ENCODE measurements at regions of chr2 and their contacts with region 1.

Region 1: DNA sequence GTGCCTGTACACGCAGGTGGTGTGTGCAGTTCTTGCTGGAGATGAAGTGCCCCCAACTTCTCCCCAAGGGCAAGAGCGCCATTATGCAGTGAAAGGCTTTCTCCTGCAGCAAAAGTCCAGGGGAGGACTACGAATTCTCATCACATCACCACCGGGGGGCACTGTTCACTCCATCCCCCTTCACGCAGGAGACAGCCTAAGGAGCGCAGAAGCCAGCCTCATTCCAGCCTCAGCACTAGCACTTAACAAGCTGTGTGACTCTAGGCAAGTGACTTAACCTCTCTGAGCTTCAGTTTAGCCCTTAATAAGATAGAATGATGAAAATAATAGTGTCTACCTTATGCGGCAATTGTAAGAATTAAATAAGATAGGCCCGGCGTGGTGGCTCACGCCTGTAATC is 32.3 kb downstream of the DNMT3A start:
- DNase-seq: peak; percentile 45 to 85 (median 66)
- ATAC-seq: peak; percentile 48 to 54
- H3K4me3 Mint-ChIP-seq: peak overlapping the region in 8 of 10 donors; percentile 23 to 73 (median 53)
- H3K27ac Mint-ChIP-seq: peak overlapping the region; percentile 58 to 91 (median 85)
- H3K4me1 Mint-ChIP-seq: peaks cover 50 to 98% (median 90%) of the 10 kb centered on the region in 4 donors
- H3K27me3 Mint-ChIP-seq: no peaks in the 10 kb centered on the region

Region 2: DNA sequence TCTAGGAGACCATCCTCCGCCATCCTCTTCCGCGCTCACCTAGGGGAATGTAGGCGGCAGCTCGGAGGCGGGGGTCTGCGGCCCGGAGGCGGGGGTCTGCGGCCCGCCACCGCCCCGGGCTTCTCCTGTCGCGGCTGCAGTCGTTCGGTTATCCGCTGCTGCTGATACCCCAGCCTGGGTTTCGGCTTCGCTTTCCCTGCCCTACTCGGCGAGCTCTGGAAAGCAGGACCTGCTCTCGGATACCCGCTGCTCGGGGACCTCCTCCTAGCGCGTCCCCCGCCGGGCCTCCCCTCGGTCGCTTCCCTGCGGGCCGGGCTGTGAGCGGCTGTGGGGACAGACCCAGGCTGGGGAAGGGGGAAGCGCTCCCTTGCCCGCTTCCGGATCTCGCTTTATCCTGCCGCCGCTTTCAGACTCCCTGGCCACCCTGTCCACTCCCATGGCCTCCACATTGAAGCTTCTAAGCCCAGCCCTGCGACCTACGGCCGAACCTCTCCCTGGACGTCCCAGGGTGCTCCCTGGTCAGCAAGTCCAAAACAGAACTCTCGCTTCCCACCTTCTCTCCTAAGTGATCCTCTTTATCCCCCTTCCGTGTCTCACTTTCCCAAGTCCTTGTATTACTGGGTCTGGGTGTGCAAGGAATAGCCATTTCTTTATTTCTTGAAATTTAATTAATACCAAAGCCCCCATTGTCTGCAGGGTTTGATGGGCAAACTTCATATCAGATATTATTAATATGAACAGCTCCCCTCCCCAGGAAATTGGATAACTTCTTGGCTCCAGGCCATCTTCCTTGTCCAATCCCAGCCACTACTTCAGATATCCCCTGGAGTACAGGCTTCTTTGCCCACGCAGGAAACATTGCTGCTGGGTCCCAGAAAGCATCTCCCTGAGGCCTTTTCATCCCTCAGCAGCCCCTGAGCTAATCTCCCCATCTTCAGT is 1259.1 kb before region 1 on chr2:
- POLR2A ChIA-PET with region 1: no interaction called
- DNase-seq: peak in 5 of 10 donors; percentile 8 to 17 (median 12)
- ATAC-seq: no peak
- H3K4me3 Mint-ChIP-seq: peak overlapping the region in 8 of 10 donors; percentile 49 to 88 (median 78)
- H3K27ac Mint-ChIP-seq: no peak overlapping the region
- H3K4me1 Mint-ChIP-seq: peaks cover 6 to 26% (median 24%) of the 10 kb centered on the region in 4 donors
- H3K27me3 Mint-ChIP-seq: peaks cover 0 to 8% (median 4%) of the 10 kb centered on the region in 5 donors

Region 3: GRCh38 chr2:25252281-25253105 is 56.9 kb before region 1 on chr2:
- POLR2A ChIA-PET with region 1: interaction called, 24 read pairs
- DNase-seq: peak; percentile 35 to 72 (median 49)
- ATAC-seq: peak; percentile 46 to 56
- H3K4me3 Mint-ChIP-seq: peak overlapping the region; percentile 83 to 95 (median 91)
- H3K27ac Mint-ChIP-seq: peak overlapping the region; percentile 85 to 96 (median 91)
- H3K4me1 Mint-ChIP-seq: peaks cover 42 to 62% (median 53%) of the 10 kb centered on the region in 4 donors
- H3K27me3 Mint-ChIP-seq: no peaks in the 10 kb centered on the region

Region 4: GRCh38 chr2:25332571-25332970 is 23.2 kb after region 1 on chr2:
- POLR2A ChIA-PET with region 1: interaction called, 69 read pairs
- DNase-seq: no peak
- ATAC-seq: no peak
- H3K4me3 Mint-ChIP-seq: peak overlapping the region in 5 of 10 donors; percentile 13 to 80 (median 29)
- H3K27ac Mint-ChIP-seq: peak overlapping the region; percentile 13 to 94 (median 78)
- H3K4me1 Mint-ChIP-seq: peaks cover 56 to 90% (median 83%) of the 10 kb centered on the region in 4 donors
- H3K27me3 Mint-ChIP-seq: no peaks in the 10 kb centered on the region

Region 5: GRCh38 chr2:25362049-25362433 is 52.6 kb after region 1 on chr2:
- POLR2A ChIA-PET with region 1: interaction called, 11 read pairs
- DNase-seq: peak; percentile 85 to 99 (median 93)
- ATAC-seq: peak; percentile 89 to 97
- H3K4me3 Mint-ChIP-seq: peak overlapping the region; percentile 89 to 99 (median 94)
- H3K27ac Mint-ChIP-seq: peak overlapping the region; percentile 85 to 100 (median 94)
- H3K4me1 Mint-ChIP-seq: peaks cover 11 to 21% (median 19%) of the 10 kb centered on the region in 4 donors
- H3K27me3 Mint-ChIP-seq: no peaks in the 10 kb centered on the region

Region 6: DNA sequence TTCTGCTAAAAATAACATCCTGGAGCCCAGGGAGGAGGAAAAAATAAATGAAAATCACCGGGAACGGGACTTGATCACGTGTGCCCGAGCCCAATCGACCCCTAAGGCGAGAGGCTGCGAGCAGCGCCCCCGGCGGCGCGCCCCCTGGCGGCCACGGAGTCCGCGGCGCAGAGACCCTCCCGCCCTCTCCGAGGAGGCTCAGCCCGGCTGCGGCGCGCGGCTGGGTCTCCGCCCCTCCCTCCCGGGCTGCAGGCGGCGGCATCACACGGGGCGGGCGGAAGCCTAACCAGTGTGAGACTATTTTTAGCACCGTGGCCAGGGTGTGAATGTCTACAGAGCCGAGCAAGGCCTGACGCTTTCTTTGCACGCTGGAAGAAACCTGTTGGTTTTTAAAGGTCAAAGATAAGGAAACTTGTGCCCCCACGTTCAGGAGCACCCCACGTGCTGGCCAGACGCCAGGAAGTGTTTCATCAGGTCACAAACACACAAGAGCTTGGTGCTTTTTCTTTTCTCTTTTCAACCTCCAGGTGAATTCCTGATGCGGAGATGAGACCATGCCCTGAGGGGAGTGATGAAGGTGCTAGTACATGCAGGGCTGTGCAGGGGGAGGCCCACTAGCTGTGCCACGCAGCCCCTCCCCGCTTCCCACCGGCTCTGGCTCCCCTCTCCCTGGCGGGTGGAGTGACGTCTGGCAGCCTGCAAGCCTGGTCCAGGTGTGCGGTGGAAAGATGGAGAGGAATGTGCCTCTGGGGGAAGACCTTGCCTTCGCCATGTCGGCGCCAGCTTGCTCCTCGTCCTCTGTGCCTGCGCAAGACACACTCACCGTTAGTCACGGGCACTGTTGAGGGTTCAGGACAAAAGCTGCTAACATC is 67.6 kb after region 1 on chr2:
- POLR2A ChIA-PET with region 1: interaction called, 16 read pairs
- DNase-seq: peak; percentile 87 to 95 (median 91)
- ATAC-seq: peak; percentile 98 to 99
- H3K4me3 Mint-ChIP-seq: peak overlapping the region; percentile 69 to 85 (median 80)
- H3K27ac Mint-ChIP-seq: peak overlapping the region; percentile 92 to 98 (median 94)
- H3K4me1 Mint-ChIP-seq: peaks cover 17 to 43% (median 39%) of the 10 kb centered on the region in 4 donors
- H3K27me3 Mint-ChIP-seq: no peaks in the 10 kb centered on the region